Prostate gland (tissue), 2 donors: ENCODE measurements at regions of chr10 and their contacts with region 1.

Region 1: GRCh38 chr10:79195091-79195923 is 126.5 kb downstream of the ZMIZ1 start:
- DNase-seq: peak; percentile 90
- H3K4me3 ChIP-seq: no peak overlapping the region
- H3K27ac ChIP-seq: peak overlapping the region; percentile 61 to 66
- H3K4me1 ChIP-seq: peaks cover 7% of the 10 kb centered on the region
- H3K27me3 ChIP-seq: no peaks in the 10 kb centered on the region
- CTCF ChIP-seq: peak; percentile 94 to 98 (median 98)
- POLR2A ChIP-seq: no peak

Region 2: DNA sequence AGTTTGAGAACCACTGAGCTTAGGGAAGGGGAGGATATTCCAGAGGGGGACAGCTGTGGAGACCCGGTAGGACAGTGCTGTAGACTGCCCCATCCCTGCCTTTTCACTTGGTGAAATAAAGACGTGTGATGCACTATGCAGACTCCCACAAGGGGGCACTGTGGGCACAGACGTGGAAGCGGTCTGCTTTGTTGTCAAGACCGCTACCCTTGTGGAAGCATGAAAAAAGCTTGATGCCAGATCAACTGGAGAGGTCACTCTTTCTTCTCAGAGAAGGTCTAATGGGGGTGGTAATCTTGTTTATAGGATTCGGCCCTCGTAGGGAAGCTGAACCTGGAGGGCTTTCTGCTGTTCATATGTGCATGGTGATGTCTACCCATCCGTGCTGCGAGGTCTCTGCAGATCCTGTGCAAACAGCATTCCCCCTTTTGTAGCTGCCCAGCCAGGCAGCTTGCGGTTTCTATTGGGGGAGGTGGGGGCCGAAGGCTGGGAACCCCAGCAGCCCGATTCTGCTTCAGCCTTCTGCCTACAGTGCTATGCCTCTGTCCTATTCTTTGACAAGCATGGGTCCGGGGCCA is 1147.9 kb before region 1 on chr10:
- intact Hi-C with region 1: loop called (anchors 5 kb)
- DNase-seq: peak; percentile 85
- H3K4me3 ChIP-seq: no peak overlapping the region
- H3K27ac ChIP-seq: no peak overlapping the region
- H3K4me1 ChIP-seq: no peaks in the 10 kb centered on the region
- H3K27me3 ChIP-seq: no peaks in the 10 kb centered on the region
- CTCF ChIP-seq: peak; percentile 84 to 90 (median 87)
- POLR2A ChIP-seq: no peak

Region 3: GRCh38 chr10:78302989-78303854 is 892.1 kb before region 1 on chr10:
- intact Hi-C with region 1: loop called (anchors 5 kb)
- DNase-seq: peak; percentile 90
- H3K4me3 ChIP-seq: peak overlapping the region; percentile 48 to 54
- H3K27ac ChIP-seq: peak overlapping the region; percentile 84 to 87
- H3K4me1 ChIP-seq: peaks cover 4% of the 10 kb centered on the region
- H3K27me3 ChIP-seq: no peaks in the 10 kb centered on the region
- CTCF ChIP-seq: peak; percentile 54 to 91 (median 77)
- POLR2A ChIP-seq: peak; percentile 71

Region 4: GRCh38 chr10:78664929-78665553 is 530.3 kb before region 1 on chr10:
- intact Hi-C with region 1: loop called (anchors 5 kb)
- DNase-seq: no peak
- H3K4me3 ChIP-seq: no peak overlapping the region
- H3K27ac ChIP-seq: no peak overlapping the region
- H3K4me1 ChIP-seq: no peaks in the 10 kb centered on the region
- H3K27me3 ChIP-seq: no peaks in the 10 kb centered on the region
- CTCF ChIP-seq: peak in 3 of 4 experiments; percentile 52 to 65 (median 57)
- POLR2A ChIP-seq: no peak

Region 5: DNA sequence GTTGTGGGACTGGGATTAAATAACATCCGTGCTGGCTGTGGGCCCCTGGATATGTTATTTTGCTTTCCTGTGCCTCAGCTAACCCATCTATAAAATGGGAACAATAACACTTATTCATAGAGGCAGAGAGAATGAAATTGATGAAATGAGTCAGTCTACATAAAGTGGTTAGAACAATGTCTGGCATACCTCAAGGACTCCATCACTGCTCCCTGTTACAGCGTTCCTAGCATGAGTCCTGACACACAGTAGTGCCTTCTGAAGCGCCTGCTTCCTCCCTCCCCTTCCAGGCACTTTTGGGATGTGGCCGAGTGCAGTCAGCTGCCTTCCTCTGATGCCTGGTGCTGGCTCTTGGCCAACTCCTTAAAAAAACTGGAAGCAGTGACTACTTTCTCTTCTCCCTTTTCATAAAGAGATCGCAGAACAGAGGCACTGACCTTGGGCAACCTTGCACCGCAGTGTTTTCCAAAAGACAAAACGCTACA is 234.9 kb before region 1 on chr10:
- intact Hi-C with region 1: loop called (anchors 10 kb)
- DNase-seq: peak; percentile 51
- H3K4me3 ChIP-seq: no peak overlapping the region
- H3K27ac ChIP-seq: no peak overlapping the region
- H3K4me1 ChIP-seq: peaks cover 6% of the 10 kb centered on the region
- H3K27me3 ChIP-seq: no peaks in the 10 kb centered on the region
- CTCF ChIP-seq: no peak
- POLR2A ChIP-seq: no peak

Region 6: DNA sequence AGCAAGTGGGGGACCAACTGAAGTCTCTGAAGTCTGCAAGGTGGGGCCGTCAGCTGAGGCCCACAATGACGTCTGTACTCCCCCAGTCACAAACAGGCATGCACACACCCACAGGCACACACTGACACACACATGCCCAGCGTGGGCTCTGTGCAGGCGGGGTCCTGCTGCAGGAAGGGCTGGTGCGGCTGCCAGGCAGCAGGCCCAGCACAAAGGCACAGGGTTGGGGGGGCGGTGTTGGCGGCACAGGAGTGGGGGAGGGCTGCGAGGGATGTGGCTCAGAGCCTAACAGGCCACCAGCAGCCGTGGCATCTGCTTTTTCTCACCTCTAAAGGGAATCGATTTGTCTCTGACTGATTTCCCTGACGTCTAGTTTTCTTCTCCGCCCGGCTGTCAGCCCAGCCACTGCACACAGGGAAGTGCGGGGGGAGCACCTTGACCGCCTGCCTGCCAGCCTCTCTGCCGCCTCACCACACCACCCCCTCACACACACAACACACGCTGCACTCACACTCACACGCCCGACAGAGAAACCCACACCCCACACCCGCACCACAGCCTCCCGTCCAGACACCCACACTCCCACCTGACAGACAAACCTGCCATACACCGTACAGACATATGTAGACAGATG is 170.0 kb before region 1 on chr10:
- intact Hi-C with region 1: no loop called
- DNase-seq: no peak
- H3K4me3 ChIP-seq: no peak overlapping the region
- H3K27ac ChIP-seq: no peak overlapping the region
- H3K4me1 ChIP-seq: no peaks in the 10 kb centered on the region
- H3K27me3 ChIP-seq: no peaks in the 10 kb centered on the region
- CTCF ChIP-seq: no peak
- POLR2A ChIP-seq: no peak

Region 7: GRCh38 chr10:79266543-79267312 is 71.4 kb after region 1 on chr10:
- intact Hi-C with region 1: no loop called
- DNase-seq: no peak
- H3K4me3 ChIP-seq: no peak overlapping the region
- H3K27ac ChIP-seq: peak overlapping the region; percentile 32 to 39
- H3K4me1 ChIP-seq: peaks cover 14% of the 10 kb centered on the region
- H3K27me3 ChIP-seq: no peaks in the 10 kb centered on the region
- CTCF ChIP-seq: no peak
- POLR2A ChIP-seq: no peak